CD4-positive, alpha-beta T cell (primary cell): ENCODE measurements at regions of chr12 and their contacts with region 1.

Region 1: GRCh38 chr12:14989790-14990189 is 16.9 kb downstream of the PDE6H start:
- DNase-seq: no peak
- ATAC-seq: no peak
- H3K4me3 ChIP-seq: no peak overlapping the region
- H3K4me3 Mint-ChIP-seq: no peak overlapping the region
- H3K27ac ChIP-seq: no peak overlapping the region
- H3K27ac Mint-ChIP-seq: no peak overlapping the region
- H3K4me1 ChIP-seq: peaks cover 15% of the 10 kb centered on the region
- H3K4me1 Mint-ChIP-seq: peaks cover 38% of the 10 kb centered on the region
- H3K27me3 ChIP-seq: no peaks in the 10 kb centered on the region
- H3K27me3 Mint-ChIP-seq: no peaks in the 10 kb centered on the region
- CTCF ChIP-seq: no peak

Region 2: DNA sequence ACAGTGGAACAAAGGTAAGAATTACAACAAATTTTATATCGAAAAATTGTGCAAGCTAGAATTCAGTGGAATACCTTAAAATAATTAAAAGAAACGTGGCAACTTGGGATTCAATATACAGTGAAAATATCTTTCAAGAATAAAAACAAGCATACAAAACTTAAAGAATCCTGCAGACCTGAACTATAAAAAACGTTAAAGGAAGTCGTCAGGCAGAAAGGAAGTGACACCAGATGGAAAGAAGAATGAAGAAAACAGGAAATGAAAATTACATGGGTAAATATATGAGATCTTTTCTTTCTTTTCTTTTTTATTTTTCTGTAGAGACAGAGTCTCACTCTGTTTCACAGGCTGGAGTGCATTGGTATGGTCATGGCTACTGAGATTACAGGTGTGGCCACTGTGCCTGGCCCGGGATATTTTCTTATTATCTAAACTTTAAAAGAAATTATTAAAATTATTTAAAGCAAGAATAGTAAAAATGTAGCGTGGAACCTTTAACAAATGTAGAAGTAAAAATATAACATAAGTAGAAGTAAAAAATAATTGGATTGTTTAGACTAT is 108.8 kb before region 1 on chr12:
- CTCF ChIA-PET with region 1: no interaction called
- POLR2A ChIA-PET with region 1: no interaction called
- intact Hi-C with region 1: no loop called
- DNase-seq: no peak
- ATAC-seq: no peak
- H3K4me3 ChIP-seq: no peak overlapping the region
- H3K4me3 Mint-ChIP-seq: peak overlapping the region; percentile 30
- H3K27ac ChIP-seq: no peak overlapping the region
- H3K27ac Mint-ChIP-seq: peak overlapping the region; percentile 60
- H3K4me1 ChIP-seq: peaks cover 10% of the 10 kb centered on the region
- H3K4me1 Mint-ChIP-seq: peaks cover 39% of the 10 kb centered on the region
- H3K27me3 ChIP-seq: no peaks in the 10 kb centered on the region
- H3K27me3 Mint-ChIP-seq: no peaks in the 10 kb centered on the region
- CTCF ChIP-seq: no peak

Region 3: GRCh38 chr12:14937689-14938088 is 52.1 kb before region 1 on chr12:
- CTCF ChIA-PET with region 1: interaction called, 30 read pairs
- POLR2A ChIA-PET with region 1: interaction called, 19 read pairs
- intact Hi-C with region 1: loop called (anchors 2 kb)
- DNase-seq: peak in 5 of 14 experiments; percentile 33 to 68 (median 55)
- ATAC-seq: peak; percentile 35
- H3K4me3 ChIP-seq: no peak overlapping the region
- H3K4me3 Mint-ChIP-seq: no peak overlapping the region
- H3K27ac ChIP-seq: no peak overlapping the region
- H3K27ac Mint-ChIP-seq: peak overlapping the region; percentile 72
- H3K4me1 ChIP-seq: peaks cover 17% of the 10 kb centered on the region
- H3K4me1 Mint-ChIP-seq: peaks cover 63% of the 10 kb centered on the region
- H3K27me3 ChIP-seq: no peaks in the 10 kb centered on the region
- H3K27me3 Mint-ChIP-seq: no peaks in the 10 kb centered on the region
- CTCF ChIP-seq: peak; percentile 59

Region 4: GRCh38 chr12:14972816-14973215 is 17.0 kb before region 1 on chr12 and contains the start of gene PDE6H:
- CTCF ChIA-PET with region 1: no interaction called
- POLR2A ChIA-PET with region 1: no interaction called
- intact Hi-C with region 1: loop called in 1 of 2 experiments (anchors 2 kb)
- DNase-seq: no peak
- ATAC-seq: no peak
- H3K4me3 ChIP-seq: no peak within 1 kb of the TSS
- H3K4me3 Mint-ChIP-seq: no peak within 1 kb of the TSS
- H3K27ac ChIP-seq: no peak within 1 kb of the TSS
- H3K27ac Mint-ChIP-seq: no peak within 1 kb of the TSS
- H3K4me1 ChIP-seq: peaks cover 5% of the 10 kb centered on the region
- H3K4me1 Mint-ChIP-seq: peaks cover 56% of the 10 kb centered on the region
- H3K27me3 ChIP-seq: no peaks in the 10 kb centered on the region
- H3K27me3 Mint-ChIP-seq: no peaks in the 10 kb centered on the region
- CTCF ChIP-seq: no peak
- total RNA-seq, gene PDE6H: not detected

Region 5: DNA sequence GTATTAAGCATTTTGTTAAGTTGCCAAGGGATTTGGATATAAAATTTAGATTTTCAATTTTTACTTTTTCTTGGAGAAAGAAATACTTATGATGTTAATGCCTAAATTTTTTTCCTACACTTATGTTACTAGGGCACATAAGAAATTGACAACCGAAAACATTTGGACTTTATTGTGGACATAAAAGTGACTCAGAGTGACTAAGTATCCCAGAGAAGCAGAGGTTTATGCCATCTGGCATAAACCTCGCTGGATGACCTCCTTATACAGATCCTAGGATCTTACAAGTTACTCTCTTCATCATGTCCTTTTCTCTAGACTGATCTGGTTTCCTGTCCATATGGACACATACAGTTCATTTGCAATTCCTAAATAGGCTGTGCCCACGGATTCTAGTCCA is 141.6 kb after region 1 on chr12:
- CTCF ChIA-PET with region 1: no interaction called
- POLR2A ChIA-PET with region 1: no interaction called
- intact Hi-C with region 1: no loop called
- DNase-seq: no peak
- ATAC-seq: no peak
- H3K4me3 ChIP-seq: no peak overlapping the region
- H3K4me3 Mint-ChIP-seq: no peak overlapping the region
- H3K27ac ChIP-seq: no peak overlapping the region
- H3K27ac Mint-ChIP-seq: no peak overlapping the region
- H3K4me1 ChIP-seq: no peaks in the 10 kb centered on the region
- H3K4me1 Mint-ChIP-seq: no peaks in the 10 kb centered on the region
- H3K27me3 ChIP-seq: no peaks in the 10 kb centered on the region
- H3K27me3 Mint-ChIP-seq: no peaks in the 10 kb centered on the region
- CTCF ChIP-seq: no peak

Region 6: DNA sequence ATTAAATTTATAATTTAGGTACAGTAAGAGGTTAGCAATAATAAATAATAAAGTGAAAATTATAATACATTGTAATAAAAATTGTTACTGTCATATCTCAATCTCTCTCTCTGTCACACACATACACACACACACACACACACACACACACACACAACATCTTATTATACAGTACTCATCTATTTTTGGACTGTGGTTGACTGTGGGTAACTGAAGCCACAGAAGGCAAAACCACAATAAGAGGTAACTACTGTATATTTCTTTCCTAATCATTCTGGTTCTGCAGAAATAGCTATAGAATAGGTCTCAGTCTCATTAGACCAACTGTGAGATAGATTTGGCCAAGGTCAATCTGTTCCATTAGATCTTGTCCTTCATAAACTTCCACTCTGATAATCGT is 299.4 kb after region 1 on chr12:
- CTCF ChIA-PET with region 1: no interaction called
- POLR2A ChIA-PET with region 1: no interaction called
- intact Hi-C with region 1: no loop called
- DNase-seq: peak in 1 of 14 experiments; percentile 10
- ATAC-seq: no peak
- H3K4me3 ChIP-seq: no peak overlapping the region
- H3K4me3 Mint-ChIP-seq: no peak overlapping the region
- H3K27ac ChIP-seq: no peak overlapping the region
- H3K27ac Mint-ChIP-seq: no peak overlapping the region
- H3K4me1 ChIP-seq: no peaks in the 10 kb centered on the region
- H3K4me1 Mint-ChIP-seq: peaks cover 4% of the 10 kb centered on the region
- H3K27me3 ChIP-seq: no peaks in the 10 kb centered on the region
- H3K27me3 Mint-ChIP-seq: peaks cover 11% of the 10 kb centered on the region
- CTCF ChIP-seq: no peak

Region 7: GRCh38 chr12:15477761-15478160 is 488.0 kb after region 1 on chr12:
- CTCF ChIA-PET with region 1: no interaction called
- POLR2A ChIA-PET with region 1: no interaction called
- intact Hi-C with region 1: no loop called
- DNase-seq: no peak
- ATAC-seq: no peak
- H3K4me3 ChIP-seq: no peak overlapping the region
- H3K4me3 Mint-ChIP-seq: no peak overlapping the region
- H3K27ac ChIP-seq: no peak overlapping the region
- H3K27ac Mint-ChIP-seq: no peak overlapping the region
- H3K4me1 ChIP-seq: no peaks in the 10 kb centered on the region
- H3K4me1 Mint-ChIP-seq: no peaks in the 10 kb centered on the region
- H3K27me3 ChIP-seq: peaks cover 0 to 5% of the 10 kb centered on the region in 2 experiments
- H3K27me3 Mint-ChIP-seq: peaks cover 38% of the 10 kb centered on the region
- CTCF ChIP-seq: no peak